Prostate gland (tissue), 2 donors: ENCODE measurements at regions of chr22 and their contacts with region 1.

Region 1: DNA sequence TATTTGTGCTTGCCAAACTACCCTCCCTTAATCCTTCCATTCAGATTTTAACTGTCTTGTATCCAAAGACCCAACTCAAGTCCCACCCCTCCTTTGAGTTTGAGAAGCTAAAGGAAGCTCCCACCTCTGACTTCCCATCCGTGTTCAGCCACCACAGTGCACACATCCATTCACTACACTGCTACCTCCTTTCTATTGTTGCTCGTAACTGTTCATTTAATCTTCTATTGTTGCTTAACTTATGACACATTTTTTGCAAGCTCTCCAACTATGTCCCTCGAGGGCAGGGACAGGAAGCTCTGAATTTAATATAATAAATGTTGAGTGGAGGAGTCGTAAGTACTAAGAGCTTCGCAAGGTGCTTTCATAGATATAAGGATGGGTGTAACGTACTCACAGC is 10.4 kb downstream of the LARGE1 start:
- DNase-seq: no peak
- H3K4me3 ChIP-seq: no peak overlapping the region
- H3K27ac ChIP-seq: no peak overlapping the region
- H3K4me1 ChIP-seq: no peaks in the 10 kb centered on the region
- H3K27me3 ChIP-seq: no peaks in the 10 kb centered on the region
- CTCF ChIP-seq: no peak
- POLR2A ChIP-seq: no peak

Region 2: GRCh38 chr22:33875316-33875715 is 34.6 kb before region 1 on chr22:
- intact Hi-C with region 1: loop called (anchors 5 kb)
- DNase-seq: no peak
- H3K4me3 ChIP-seq: no peak overlapping the region
- H3K27ac ChIP-seq: no peak overlapping the region
- H3K4me1 ChIP-seq: no peaks in the 10 kb centered on the region
- H3K27me3 ChIP-seq: no peaks in the 10 kb centered on the region
- CTCF ChIP-seq: no peak
- POLR2A ChIP-seq: no peak